Esophagus muscularis mucosa (tissue), 4 donors: ENCODE measurements at regions of chr17 and their contacts with region 1.

Region 1: DNA sequence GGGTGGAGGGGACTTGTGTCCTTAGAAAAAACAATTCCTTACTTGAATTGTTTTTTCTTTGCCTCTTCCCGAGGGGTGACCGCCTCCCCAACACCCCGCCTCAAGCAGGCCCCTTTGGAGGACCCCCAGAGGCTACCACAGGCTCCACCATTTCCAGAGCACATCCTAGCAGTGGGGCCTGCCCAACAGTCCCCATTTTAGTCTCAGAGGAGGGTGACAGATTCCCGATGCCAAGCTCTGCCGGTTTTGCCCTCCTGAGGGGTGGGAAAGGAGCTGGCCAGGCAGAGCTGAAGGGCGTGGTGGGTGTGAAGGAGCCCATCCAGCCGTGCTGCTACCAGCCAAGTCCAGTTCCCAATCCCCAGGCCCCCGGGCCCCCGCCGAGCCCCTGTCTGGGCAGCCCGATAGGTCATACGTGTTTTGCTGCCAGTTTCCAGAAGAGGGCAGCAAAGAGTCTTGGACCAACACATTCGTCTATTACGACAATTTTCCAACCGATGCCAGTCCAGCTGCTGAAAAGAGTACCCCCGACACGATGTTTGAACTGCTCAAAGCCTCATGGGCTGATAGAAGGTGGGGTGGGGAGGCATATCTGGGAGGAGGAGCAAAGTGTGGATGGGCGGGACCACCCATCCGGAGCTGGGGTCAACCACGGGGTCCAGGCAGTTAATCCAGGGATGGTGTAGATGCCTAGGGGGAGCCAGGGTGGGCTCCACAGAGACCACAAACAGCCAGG is 18.8 kb upstream of the GAA start:
- DNase-seq: no peak
- H3K4me3 ChIP-seq: peak overlapping the region in 3 of 4 donors; percentile 29 to 46 (median 31)
- H3K27ac ChIP-seq: no peak overlapping the region
- H3K4me1 ChIP-seq: peaks cover 6 to 10% (median 8%) of the 10 kb centered on the region in 4 donors
- H3K27me3 ChIP-seq: no peaks in the 10 kb centered on the region
- CTCF ChIP-seq: peak; percentile 65 to 89 (median 73)
- EP300 ChIP-seq: no peak
- POLR2A ChIP-seq: no peak

Region 2: GRCh38 chr17:80008383-80008840 is 74.2 kb before region 1 on chr17:
- intact Hi-C with region 1: loop called (anchors 5 kb)
- DNase-seq: no peak
- H3K4me3 ChIP-seq: no peak overlapping the region
- H3K27ac ChIP-seq: no peak overlapping the region
- H3K4me1 ChIP-seq: peaks cover 13 to 23% (median 19%) of the 10 kb centered on the region in 4 donors
- H3K27me3 ChIP-seq: no peaks in the 10 kb centered on the region
- CTCF ChIP-seq: peak; percentile 93 to 99 (median 95)
- EP300 ChIP-seq: no peak
- POLR2A ChIP-seq: no peak

Region 3: DNA sequence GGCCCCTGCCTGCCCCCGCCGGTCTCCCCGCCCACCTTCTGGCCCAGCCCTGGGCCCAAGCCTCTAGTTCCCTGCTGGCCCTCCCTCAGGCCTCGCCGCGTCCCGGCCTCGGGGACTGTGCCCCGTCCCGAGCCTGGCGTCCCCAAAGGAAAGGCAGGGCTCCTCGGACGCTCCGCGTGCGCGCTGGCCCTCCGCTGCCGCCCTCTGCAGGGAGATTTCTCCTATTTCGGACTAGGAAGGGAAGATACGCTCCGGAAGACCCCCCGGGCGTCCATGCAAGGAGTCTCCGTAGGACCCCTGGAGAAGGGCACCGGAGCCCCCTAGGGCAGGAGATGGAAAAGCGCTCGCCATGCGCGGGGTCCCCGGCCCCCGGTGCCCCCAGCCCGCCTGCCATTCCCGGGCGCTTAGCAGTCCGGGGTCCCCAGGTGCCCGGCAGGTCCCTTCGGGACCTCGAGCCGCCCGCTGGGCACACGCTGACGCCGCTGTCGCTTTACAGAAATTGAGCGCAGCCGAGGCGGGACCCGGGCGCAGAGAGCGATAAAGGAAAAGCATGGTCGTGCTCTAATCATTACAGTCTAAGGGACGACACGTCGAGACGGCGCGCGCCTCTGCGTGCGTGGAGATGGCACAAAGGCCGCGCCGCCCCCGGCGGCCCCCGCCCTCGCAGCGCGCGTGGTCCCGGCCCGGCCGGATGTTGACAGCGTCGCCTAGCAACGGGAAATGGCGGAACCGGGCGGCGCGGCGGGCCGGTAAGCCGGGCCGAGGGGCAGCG is 46.4 kb before region 1 on chr17 and contains the start of gene CCDC40:
- intact Hi-C with region 1: no loop called
- DNase-seq: peak; percentile 94
- H3K4me3 ChIP-seq: peak within 1 kb of the TSS; percentile 79 to 92 (median 87)
- H3K27ac ChIP-seq: peak within 1 kb of the TSS; percentile 86 to 94 (median 92)
- H3K4me1 ChIP-seq: peaks cover 12 to 31% (median 22%) of the 10 kb centered on the region in 4 donors
- H3K27me3 ChIP-seq: no peaks in the 10 kb centered on the region
- CTCF ChIP-seq: peak in 1 of 3 experiments; percentile 15
- EP300 ChIP-seq: no peak
- POLR2A ChIP-seq: peak; percentile 48
- total RNA-seq, gene CCDC40: 4.9 to 9.5 (median 7.8) TPM